WTC11 (cell line): ENCODE measurements at regions of chr15 and their contacts with region 1.

Region 1: GRCh38 chr15:38991126-38991525 is 426.5 kb upstream of the RASGRP1 start:
- DNase-seq: no peak
- ATAC-seq: peak; percentile 65; the same call in 1 of the 2 replicates
- H3K4me3 Mint-ChIP-seq: no peak overlapping the region
- H3K27ac Mint-ChIP-seq: no peak overlapping the region
- H3K4me1 Mint-ChIP-seq: no peaks in the 10 kb centered on the region
- H3K27me3 Mint-ChIP-seq: no peaks in the 10 kb centered on the region; the same call in 1 of the 2 replicates
- CTCF ChIP-seq: peak; percentile 32; the same call in 1 of the 2 replicates

Region 2: DNA sequence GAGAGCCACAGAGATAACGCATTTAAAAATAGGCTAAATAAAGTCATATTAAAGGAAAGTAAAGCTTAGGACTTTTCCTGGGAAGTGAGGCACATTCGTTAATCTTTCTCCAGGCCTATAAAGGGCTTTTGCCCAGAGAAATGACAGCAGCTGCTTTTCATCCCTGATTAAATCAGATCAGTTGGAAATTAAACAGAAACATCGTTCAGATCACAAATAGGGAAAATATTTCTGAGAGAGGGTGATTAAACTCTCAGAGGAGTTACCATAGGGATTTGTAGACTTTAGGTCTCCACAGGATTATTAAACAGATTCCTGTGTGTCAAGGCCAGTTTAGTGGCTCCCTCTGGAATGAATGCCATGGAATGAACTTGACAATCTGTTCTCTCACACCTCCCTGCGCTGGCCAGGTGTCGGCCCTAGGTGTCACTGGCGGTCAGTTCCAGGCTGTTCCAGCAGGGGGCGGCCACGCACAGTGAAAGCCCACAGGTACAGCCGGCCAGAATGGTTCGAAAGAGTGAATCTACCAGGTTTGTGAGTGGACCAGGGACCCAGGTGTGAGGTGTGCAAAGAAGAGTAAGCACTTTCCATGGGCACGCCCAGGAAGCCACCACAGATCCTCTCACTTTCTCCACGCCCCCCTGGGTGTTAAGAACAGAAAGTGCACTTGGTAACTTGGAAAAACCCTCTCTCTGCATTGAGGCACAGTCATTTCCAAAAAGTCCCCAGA is 173.5 kb before region 1 on chr15:
- CTCF ChIA-PET with region 1: interaction called, 14 read pairs
- POLR2A ChIA-PET with region 1: no interaction called
- DNase-seq: peak; percentile 95
- ATAC-seq: peak; percentile 99
- H3K4me3 Mint-ChIP-seq: no peak overlapping the region
- H3K27ac Mint-ChIP-seq: no peak overlapping the region
- H3K4me1 Mint-ChIP-seq: peaks cover 9% of the 10 kb centered on the region
- H3K27me3 Mint-ChIP-seq: no peaks in the 10 kb centered on the region
- CTCF ChIP-seq: peak; percentile 98

Region 3: GRCh38 chr15:38873167-38873566 is 118.0 kb before region 1 on chr15:
- CTCF ChIA-PET with region 1: interaction called, 10 read pairs
- POLR2A ChIA-PET with region 1: no interaction called
- DNase-seq: peak; percentile 16
- ATAC-seq: peak; percentile 79
- H3K4me3 Mint-ChIP-seq: no peak overlapping the region
- H3K27ac Mint-ChIP-seq: no peak overlapping the region
- H3K4me1 Mint-ChIP-seq: peaks cover 16% of the 10 kb centered on the region
- H3K27me3 Mint-ChIP-seq: no peaks in the 10 kb centered on the region
- CTCF ChIP-seq: no peak